Activated naive CD4-positive, alpha-beta T cell treated with anti-CD3 and anti-CD28 coated beads for 36 hours (primary cell): ENCODE measurements at regions of chr6 and their contacts with region 1.

Region 1: DNA sequence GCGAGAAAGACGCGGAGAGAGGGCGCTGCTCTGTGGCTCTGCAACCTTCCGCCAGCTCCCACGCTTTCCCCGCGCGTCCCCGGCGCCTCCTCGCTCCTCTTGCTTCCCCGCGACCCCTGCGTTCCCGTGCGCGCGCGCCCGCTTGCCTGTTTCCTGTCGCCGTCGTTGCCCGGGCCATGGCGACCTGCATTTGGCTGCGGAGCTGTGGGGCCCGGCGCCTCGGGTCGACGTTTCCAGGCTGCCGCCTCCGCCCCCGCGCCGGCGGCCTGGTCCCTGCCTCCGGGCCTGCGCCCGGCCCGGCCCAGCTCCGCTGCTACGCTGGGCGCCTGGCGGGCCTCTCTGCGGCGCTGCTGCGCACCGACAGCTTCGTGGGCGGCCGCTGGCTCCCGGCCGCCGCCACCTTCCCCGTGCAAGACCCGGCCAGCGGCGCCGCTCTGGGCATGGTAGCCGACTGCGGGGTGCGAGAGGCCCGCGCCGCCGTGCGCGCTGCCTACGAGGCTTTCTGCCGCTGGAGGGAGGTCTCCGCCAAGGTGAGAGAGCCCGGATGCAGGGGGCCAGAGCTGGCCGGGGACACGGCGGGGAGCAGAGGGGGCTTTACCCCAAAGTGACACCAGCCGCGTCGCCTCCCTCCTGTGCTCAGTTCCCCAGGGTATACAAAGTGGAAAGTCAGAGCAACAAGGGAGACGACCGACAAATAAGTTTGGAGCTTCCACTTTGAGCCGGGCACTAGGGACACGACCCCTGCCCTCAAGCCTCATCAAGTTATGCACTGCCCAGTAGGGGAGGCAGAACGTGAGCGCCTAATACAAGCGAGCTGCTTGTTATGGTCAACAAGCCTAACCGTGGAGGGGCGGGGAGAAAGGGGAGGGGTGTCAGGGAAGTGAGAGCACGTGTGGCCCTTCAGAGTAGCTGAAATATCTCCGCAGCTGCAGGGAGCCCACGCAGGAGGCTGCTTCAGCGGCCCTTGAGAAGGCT is at the start of gene ALDH5A1:
- DNase-seq: peak; percentile 87
- H3K4me3 Mint-ChIP-seq: peak within 1 kb of the TSS; percentile 79
- H3K27ac Mint-ChIP-seq: peak within 1 kb of the TSS; percentile 19
- H3K4me1 Mint-ChIP-seq: peaks cover 14% of the 10 kb centered on the region
- H3K27me3 Mint-ChIP-seq: no peaks in the 10 kb centered on the region
- total RNA-seq, gene ALDH5A1: 15.8 to 16.8 TPM

Region 2: GRCh38 chr6:24402697-24403501 is 92.2 kb before region 1 on chr6 and contains the start of gene MRS2:
- CTCF ChIA-PET with region 1: no interaction called
- intact Hi-C with region 1: loop called (anchors 2 kb)
- DNase-seq: peak; percentile 76
- H3K4me3 Mint-ChIP-seq: peak within 1 kb of the TSS; percentile 86
- H3K27ac Mint-ChIP-seq: peak within 1 kb of the TSS; percentile 36
- H3K4me1 Mint-ChIP-seq: peaks cover 30% of the 10 kb centered on the region
- H3K27me3 Mint-ChIP-seq: peaks cover 9% of the 10 kb centered on the region
- total RNA-seq, gene MRS2: 18.9 to 19.8 TPM

Region 3: GRCh38 chr6:24520929-24521546 is 25.9 kb after region 1 on chr6:
- CTCF ChIA-PET with region 1: interaction called, 47 read pairs
- intact Hi-C with region 1: loop called (anchors 1 kb)
- DNase-seq: peak; percentile 62
- H3K4me3 Mint-ChIP-seq: no peak overlapping the region
- H3K27ac Mint-ChIP-seq: no peak overlapping the region
- H3K4me1 Mint-ChIP-seq: peaks cover 8% of the 10 kb centered on the region
- H3K27me3 Mint-ChIP-seq: no peaks in the 10 kb centered on the region

Region 4: DNA sequence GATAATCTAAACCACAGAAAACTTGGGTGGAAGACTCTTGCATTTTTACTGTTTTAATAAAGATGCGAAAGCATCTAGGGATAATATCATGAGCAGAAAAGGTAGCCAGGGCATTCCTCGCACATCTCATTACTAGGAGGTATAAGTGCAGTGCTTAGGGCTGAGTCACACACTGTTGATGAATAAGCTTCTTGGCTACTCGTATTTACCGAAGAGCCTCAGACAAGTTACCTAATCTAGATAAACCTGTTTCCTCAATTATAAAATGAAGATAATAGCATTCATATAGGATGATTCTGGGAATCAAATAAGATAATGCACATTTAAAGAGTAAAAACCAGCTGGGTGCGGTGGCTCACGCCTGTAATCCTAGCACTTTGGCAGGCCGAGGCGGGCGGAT is 151.7 kb after region 1 on chr6:
- CTCF ChIA-PET with region 1: no interaction called
- intact Hi-C with region 1: loop called (anchors 5 kb)
- DNase-seq: no peak
- H3K4me3 Mint-ChIP-seq: peak overlapping the region; percentile 84
- H3K27ac Mint-ChIP-seq: no peak overlapping the region
- H3K4me1 Mint-ChIP-seq: peaks cover 13% of the 10 kb centered on the region
- H3K27me3 Mint-ChIP-seq: peaks cover 13% of the 10 kb centered on the region